ENCODE measurements at regions of chr17 and their contacts with region 1.

Region 1: GRCh38 chr17:35119368-35120165 is at the start of gene RAD51D:
- DNase-seq: peak; percentile 55
- H3K4me3 ChIP-seq: peak within 1 kb of the TSS; percentile 76 to 84 (median 82)
- H3K27ac ChIP-seq: peak within 1 kb of the TSS; percentile 48
- H3K4me1 ChIP-seq: peaks cover 15% of the 10 kb centered on the region
- H3K27me3 ChIP-seq: no peaks in the 10 kb centered on the region
- CTCF ChIP-seq: peak; percentile 73 to 80
- total RNA-seq, gene RAD51D: 8.5 to 15.0 TPM

Region 2: GRCh38 chr17:34420254-34420766 is 699.3 kb before region 1 on chr17:
- CTCF ChIA-PET with region 1: no interaction called
- dilution Hi-C with region 1: no loop called
- in situ Hi-C with region 1: loop called (anchors 5 to 10 kb)
- intact Hi-C with region 1: loop called (anchors 1 kb)
- DNase-seq: peak; percentile 26
- H3K4me3 ChIP-seq: no peak overlapping the region
- H3K27ac ChIP-seq: no peak overlapping the region
- H3K4me1 ChIP-seq: no peaks in the 10 kb centered on the region
- H3K27me3 ChIP-seq: no peaks in the 10 kb centered on the region
- CTCF ChIP-seq: peak; percentile 87 to 88

Region 3: GRCh38 chr17:34542700-34543336 is 576.7 kb before region 1 on chr17:
- CTCF ChIA-PET with region 1: no interaction called
- dilution Hi-C with region 1: no loop called
- in situ Hi-C with region 1: loop called (anchors 10 kb)
- intact Hi-C with region 1: loop called (anchors 1 kb)
- DNase-seq: no peak
- H3K4me3 ChIP-seq: no peak overlapping the region
- H3K27ac ChIP-seq: no peak overlapping the region
- H3K4me1 ChIP-seq: no peaks in the 10 kb centered on the region
- H3K27me3 ChIP-seq: no peaks in the 10 kb centered on the region
- CTCF ChIP-seq: peak; percentile 87 to 91

Region 4: DNA sequence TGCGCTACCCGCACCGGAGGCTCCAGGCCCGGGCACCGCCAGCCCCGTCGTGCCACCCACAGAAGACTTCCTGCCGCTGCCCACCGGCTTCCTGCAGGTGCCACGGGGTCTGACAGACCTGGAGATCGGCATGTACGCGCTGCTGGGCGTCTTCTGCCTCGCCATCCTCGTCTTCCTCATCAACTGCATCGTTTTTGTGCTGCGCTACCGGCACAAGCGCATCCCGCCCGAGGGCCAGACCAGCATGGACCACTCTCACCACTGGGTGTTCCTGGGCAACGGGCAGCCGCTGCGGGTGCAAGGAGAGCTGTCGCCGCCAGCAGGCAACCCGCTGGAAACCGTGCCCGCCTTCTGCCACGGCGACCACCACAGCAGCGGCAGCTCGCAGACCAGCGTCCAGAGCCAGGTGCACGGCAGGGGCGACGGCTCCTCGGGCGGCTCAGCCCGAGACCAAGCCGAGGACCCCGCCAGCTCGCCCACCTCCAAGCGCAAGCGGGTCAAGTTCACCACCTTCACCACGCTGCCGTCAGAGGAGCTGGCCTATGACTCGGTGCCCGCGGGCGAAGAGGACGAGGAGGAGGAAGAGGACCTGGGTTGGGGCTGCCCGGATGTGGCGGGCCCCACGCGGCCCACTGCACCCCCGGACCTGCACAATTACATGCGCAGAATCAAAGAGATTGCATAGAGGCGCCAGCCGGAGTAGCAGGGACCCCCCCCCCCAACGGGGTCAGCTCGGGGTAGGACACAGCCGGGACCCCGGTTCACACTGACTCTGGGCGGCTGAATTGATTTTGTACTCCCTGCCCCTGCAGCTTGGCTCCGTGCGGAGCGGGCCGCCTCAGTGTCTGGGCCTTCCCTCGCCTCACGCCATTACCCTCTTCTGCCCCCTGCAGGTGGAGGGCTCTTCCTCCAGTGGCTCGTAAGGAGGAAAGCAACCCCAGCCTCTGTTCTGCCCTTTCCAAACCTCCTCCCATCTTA is 481.7 kb before region 1 on chr17:
- CTCF ChIA-PET with region 1: no interaction called
- dilution Hi-C with region 1: no loop called
- in situ Hi-C with region 1: no loop called
- intact Hi-C with region 1: loop called (anchors 10 kb)
- DNase-seq: peak; percentile 32
- H3K4me3 ChIP-seq: peak overlapping the region in 1 of 3 experiments; percentile 3
- H3K27ac ChIP-seq: no peak overlapping the region
- H3K4me1 ChIP-seq: peaks cover 7% of the 10 kb centered on the region
- H3K27me3 ChIP-seq: no peaks in the 10 kb centered on the region
- CTCF ChIP-seq: peak; percentile 85 to 94

Region 5: GRCh38 chr17:34930283-34930682 is 189.3 kb before region 1 on chr17:
- CTCF ChIA-PET with region 1: no interaction called
- dilution Hi-C with region 1: no loop called
- in situ Hi-C with region 1: no loop called
- intact Hi-C with region 1: no loop called
- DNase-seq: no peak
- H3K4me3 ChIP-seq: no peak overlapping the region
- H3K27ac ChIP-seq: no peak overlapping the region
- H3K4me1 ChIP-seq: no peaks in the 10 kb centered on the region
- H3K27me3 ChIP-seq: no peaks in the 10 kb centered on the region
- CTCF ChIP-seq: no peak

Region 6: DNA sequence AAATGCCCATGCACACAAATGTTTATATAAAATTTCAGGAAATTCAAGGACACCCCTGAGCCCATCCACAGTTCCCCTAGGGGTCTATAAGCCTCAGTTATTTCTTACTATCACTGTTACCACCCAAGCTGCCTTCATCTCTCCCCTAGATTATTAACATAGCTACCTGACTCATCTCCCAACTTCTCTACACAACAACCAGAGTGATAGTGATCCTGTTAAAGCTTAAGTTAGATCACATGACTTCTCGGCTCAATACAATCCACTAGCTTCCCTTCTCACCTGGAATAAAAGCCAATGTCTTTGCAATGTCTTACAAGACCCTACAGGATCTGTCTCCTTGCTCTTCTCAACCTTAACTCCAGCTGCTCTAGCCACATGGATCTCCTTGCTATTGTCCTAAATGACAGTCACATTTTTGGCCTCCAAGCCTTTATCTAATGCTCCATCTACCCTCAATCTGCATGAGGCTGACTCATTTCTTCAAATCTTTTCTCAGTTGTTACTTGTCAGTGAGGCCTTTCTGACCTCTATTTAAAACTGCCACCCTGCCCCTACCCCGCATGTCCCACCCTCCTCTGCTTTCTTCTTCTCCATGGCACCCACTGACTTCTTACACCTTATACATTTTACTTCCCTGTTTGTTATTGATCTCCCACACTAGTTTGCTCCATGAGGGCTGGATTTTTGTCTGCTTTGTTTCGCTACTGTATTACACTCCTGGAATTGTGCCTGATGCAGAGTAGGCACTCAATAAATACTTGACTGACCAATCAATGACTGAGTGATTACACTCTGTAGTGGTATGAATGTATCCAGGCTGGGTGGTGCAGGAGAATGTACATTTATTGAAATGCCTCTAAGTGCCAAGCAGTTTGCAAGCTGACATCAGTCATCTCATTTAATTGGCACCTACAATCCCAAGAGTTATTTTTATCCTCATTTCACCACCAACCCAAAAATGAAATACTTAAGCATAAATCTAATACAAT is 144.5 kb before region 1 on chr17:
- CTCF ChIA-PET with region 1: no interaction called
- dilution Hi-C with region 1: no loop called
- in situ Hi-C with region 1: no loop called
- intact Hi-C with region 1: no loop called
- DNase-seq: no peak
- H3K4me3 ChIP-seq: no peak overlapping the region
- H3K27ac ChIP-seq: no peak overlapping the region
- H3K4me1 ChIP-seq: peaks cover 7% of the 10 kb centered on the region
- H3K27me3 ChIP-seq: no peaks in the 10 kb centered on the region
- CTCF ChIP-seq: no peak

Region 7: DNA sequence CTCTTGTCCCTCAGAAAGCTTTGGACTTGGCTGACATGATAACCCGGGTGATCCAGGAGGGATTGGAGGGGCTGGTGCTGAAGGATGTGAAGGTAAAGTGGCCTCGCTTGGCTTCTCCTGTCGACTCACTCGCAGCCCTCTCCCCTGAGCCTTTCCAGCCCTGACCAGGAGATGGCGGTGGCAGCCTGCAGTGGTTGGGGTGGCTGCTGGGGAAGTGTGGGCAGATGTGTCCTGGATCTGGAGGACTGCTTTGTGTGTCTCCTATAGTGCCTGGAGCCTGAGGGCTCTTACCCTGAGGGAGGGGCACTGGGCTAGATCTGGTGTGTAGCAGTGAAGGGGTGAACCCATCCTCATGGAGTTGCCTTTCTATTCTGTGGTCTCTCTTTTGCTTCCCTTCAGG is 121.4 kb before region 1 on chr17:
- CTCF ChIA-PET with region 1: no interaction called
- dilution Hi-C with region 1: no loop called
- in situ Hi-C with region 1: loop called (anchors 5 kb)
- intact Hi-C with region 1: loop called (anchors 1 kb)
- DNase-seq: peak; percentile 57
- H3K4me3 ChIP-seq: no peak overlapping the region
- H3K27ac ChIP-seq: no peak overlapping the region
- H3K4me1 ChIP-seq: no peaks in the 10 kb centered on the region
- H3K27me3 ChIP-seq: no peaks in the 10 kb centered on the region
- CTCF ChIP-seq: peak; percentile 95 to 98

Region 8: DNA sequence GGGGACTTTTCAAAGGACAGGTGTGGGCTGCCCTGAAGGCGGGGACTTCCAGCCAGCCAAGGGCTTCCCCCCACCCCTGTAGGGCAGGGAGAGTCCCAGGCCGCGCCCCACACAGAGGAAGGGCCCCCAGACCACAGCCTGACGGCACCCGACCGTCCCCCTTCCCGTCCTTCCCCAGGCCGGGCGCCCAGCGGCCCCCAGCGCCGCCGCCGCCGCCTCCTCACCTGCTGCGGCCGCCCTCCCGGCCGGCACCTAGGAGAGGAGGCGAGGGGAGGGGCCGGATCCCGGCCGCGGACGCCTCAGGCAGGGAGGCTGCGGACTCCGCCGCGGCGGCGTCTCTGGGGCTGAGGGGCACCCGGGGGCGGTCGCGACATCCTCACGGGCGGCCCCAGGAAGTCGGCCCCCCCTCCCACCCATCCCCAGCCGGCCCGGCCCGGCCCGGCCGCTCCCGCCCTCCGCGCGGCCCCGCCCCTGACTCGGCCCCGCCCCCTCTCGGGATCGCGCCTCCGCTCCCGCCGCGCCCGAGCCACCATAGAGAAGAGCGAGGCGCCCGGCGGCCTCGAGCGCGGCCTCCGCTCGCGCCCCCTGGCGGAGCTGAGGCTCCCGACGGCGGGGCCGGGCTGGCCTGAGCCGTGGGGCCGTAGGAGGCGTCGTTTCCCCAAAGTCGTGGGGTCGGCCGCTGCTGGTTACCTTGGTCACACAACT is 30.5 kb before region 1 on chr17:
- CTCF ChIA-PET with region 1: interaction called, 3 read pairs
- dilution Hi-C with region 1: no loop called
- in situ Hi-C with region 1: no loop called
- intact Hi-C with region 1: loop called (anchors 1 kb)
- DNase-seq: peak; percentile 82
- H3K4me3 ChIP-seq: peak overlapping the region; percentile 57 to 80 (median 59)
- H3K27ac ChIP-seq: peak overlapping the region; percentile 84
- H3K4me1 ChIP-seq: peaks cover 44% of the 10 kb centered on the region
- H3K27me3 ChIP-seq: no peaks in the 10 kb centered on the region
- CTCF ChIP-seq: peak; percentile 49 to 66

Region 9: DNA sequence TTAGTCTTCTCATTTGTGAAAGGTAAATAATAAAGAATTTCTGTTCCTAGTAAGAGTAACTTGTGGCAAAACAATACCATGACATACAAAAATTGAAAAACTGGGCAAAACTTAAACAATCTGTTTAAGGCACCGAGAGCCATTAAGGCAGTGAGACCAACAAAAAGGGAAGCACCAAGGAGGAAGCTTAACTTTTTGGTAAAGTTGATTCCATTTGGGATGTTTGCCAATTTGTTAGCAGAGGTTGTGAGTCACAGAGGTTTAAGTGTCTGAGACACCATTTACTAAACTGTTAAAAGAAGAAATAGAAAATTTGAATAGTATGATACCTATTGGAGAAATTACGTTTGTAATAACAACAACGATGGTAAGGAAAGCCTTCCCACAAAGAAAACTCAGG is 69.7 kb after region 1 on chr17:
- CTCF ChIA-PET with region 1: no interaction called
- dilution Hi-C with region 1: no loop called
- in situ Hi-C with region 1: no loop called
- intact Hi-C with region 1: no loop called
- DNase-seq: peak; percentile 52
- H3K4me3 ChIP-seq: no peak overlapping the region
- H3K27ac ChIP-seq: no peak overlapping the region
- H3K4me1 ChIP-seq: peaks cover 19% of the 10 kb centered on the region
- H3K27me3 ChIP-seq: no peaks in the 10 kb centered on the region
- CTCF ChIP-seq: no peak